Right ventricle myocardium superior (tissue), 1 donor: ENCODE measurements at regions of chr11 and their contacts with region 1.

Region 1: DNA sequence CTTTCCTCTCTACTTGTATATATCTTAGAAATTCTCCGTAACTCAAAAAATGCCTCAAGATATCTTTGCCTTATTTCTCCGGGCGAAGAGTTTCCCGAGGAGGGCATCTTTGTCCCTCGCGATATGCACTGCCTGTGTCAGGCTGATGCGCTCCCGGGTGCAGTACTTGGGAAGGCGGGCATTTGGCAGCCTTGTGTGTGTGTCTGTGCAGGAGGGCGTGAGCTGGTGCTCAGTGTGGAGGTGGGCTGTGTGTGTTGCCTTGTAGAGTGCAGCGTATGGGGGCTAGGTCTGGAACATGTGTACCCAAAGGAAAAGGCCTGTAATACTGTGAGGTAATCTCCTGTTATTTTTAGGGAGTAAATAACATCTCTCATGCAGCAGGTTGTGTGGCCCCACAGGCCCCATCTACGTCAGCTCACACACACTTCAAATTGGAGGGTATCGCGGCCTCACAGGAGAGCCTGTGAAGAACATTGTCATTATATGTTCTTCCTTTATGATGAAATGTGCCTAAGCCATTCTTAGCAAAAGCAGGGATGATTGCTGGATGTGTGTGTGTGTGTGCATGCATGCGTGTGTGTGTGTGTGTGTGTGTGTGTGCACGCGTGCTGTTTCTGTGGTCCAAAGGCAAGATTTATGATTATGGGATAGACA is 77.5 kb downstream of the KCNJ1 start:
- DNase-seq: no peak
- ATAC-seq: peak; percentile 43

Region 2: GRCh38 chr11:128824191-128825049 is 34.8 kb after region 1 on chr11:
- intact Hi-C with region 1: loop called (anchors 5 kb)
- DNase-seq: no peak
- ATAC-seq: peak; percentile 62